Activated naive CD4-positive, alpha-beta T cell treated with anti-CD3 and anti-CD28 coated beads for 36 hours (primary cell): ENCODE measurements at regions of chr15 and their contacts with region 1.

Region 1: GRCh38 chr15:67101911-67102598 is 36.7 kb downstream of the SMAD3 start:
- DNase-seq: peak; percentile 80
- H3K4me3 Mint-ChIP-seq: no peak overlapping the region
- H3K27ac Mint-ChIP-seq: no peak overlapping the region
- H3K4me1 Mint-ChIP-seq: peaks cover 31% of the 10 kb centered on the region
- H3K27me3 Mint-ChIP-seq: no peaks in the 10 kb centered on the region

Region 2: GRCh38 chr15:67065444-67066093 is 36.5 kb before region 1 on chr15 and contains the start of gene SMAD3:
- CTCF ChIA-PET with region 1: interaction called, 19 read pairs
- intact Hi-C with region 1: loop called (anchors 1 kb)
- DNase-seq: peak; percentile 80
- H3K4me3 Mint-ChIP-seq: peak within 1 kb of the TSS; percentile 95
- H3K27ac Mint-ChIP-seq: peak within 1 kb of the TSS; percentile 89
- H3K4me1 Mint-ChIP-seq: peaks cover 50% of the 10 kb centered on the region
- H3K27me3 Mint-ChIP-seq: peaks cover 17% of the 10 kb centered on the region
- total RNA-seq, gene SMAD3: 35.1 to 39.2 TPM

Region 3: GRCh38 chr15:67091071-67091979 is 10.7 kb before region 1 on chr15:
- CTCF ChIA-PET with region 1: interaction called, 9 read pairs
- intact Hi-C with region 1: loop called (anchors 1 kb)
- DNase-seq: peak; percentile 67
- H3K4me3 Mint-ChIP-seq: no peak overlapping the region
- H3K27ac Mint-ChIP-seq: no peak overlapping the region
- H3K4me1 Mint-ChIP-seq: peaks cover 64% of the 10 kb centered on the region
- H3K27me3 Mint-ChIP-seq: no peaks in the 10 kb centered on the region

Region 4: DNA sequence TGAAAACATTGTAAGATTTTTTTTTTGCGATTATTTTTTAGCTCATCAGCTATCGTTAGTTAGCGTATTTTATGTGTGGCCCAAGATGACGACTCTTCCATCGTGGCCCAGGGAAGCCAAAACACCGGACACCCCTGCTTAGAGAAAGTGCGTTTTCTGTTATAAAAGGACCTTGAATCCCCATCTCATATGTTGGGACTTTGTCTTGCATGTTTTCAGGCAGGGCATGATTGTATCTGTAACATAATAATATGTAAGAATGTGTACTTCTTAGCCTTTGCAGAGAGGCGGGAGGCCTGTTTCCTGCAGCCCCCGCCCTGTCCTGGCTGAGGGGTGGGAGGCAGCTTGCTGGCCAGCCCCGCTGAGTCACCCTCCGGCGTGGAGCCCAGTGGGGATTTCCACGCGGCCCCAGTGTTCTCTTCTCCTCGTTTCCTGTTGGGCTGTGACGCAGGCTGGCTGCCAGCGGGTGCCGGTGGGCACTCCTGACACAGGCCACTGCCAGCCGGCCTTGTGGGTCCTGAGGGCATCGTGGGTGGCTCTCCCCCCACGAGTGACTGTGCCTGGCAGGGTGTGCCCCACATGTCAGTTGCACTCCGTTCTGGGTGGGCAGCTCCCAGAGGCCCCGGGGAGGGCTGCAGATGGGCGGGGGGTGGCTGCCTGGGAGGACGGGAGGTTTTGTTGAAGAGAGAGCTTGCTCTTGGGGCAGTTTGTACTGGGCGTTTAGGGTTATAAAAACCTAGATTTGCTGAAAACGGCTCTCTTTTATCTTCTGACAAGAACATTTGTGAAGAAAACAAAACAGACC is 19.0 kb after region 1 on chr15:
- CTCF ChIA-PET with region 1: interaction called, 9 read pairs
- intact Hi-C with region 1: loop called (anchors 1 kb)
- DNase-seq: peak; percentile 94
- H3K4me3 Mint-ChIP-seq: peak overlapping the region; percentile 70
- H3K27ac Mint-ChIP-seq: peak overlapping the region; percentile 95
- H3K4me1 Mint-ChIP-seq: peaks cover 80% of the 10 kb centered on the region
- H3K27me3 Mint-ChIP-seq: no peaks in the 10 kb centered on the region

Region 5: GRCh38 chr15:67150028-67150860 is 48.2 kb after region 1 on chr15:
- CTCF ChIA-PET with region 1: interaction called, 8 read pairs
- intact Hi-C with region 1: loop called (anchors 1 kb)
- DNase-seq: peak; percentile 72
- H3K4me3 Mint-ChIP-seq: peak overlapping the region; percentile 59
- H3K27ac Mint-ChIP-seq: peak overlapping the region; percentile 91
- H3K4me1 Mint-ChIP-seq: peaks cover 67% of the 10 kb centered on the region
- H3K27me3 Mint-ChIP-seq: no peaks in the 10 kb centered on the region

Region 6: DNA sequence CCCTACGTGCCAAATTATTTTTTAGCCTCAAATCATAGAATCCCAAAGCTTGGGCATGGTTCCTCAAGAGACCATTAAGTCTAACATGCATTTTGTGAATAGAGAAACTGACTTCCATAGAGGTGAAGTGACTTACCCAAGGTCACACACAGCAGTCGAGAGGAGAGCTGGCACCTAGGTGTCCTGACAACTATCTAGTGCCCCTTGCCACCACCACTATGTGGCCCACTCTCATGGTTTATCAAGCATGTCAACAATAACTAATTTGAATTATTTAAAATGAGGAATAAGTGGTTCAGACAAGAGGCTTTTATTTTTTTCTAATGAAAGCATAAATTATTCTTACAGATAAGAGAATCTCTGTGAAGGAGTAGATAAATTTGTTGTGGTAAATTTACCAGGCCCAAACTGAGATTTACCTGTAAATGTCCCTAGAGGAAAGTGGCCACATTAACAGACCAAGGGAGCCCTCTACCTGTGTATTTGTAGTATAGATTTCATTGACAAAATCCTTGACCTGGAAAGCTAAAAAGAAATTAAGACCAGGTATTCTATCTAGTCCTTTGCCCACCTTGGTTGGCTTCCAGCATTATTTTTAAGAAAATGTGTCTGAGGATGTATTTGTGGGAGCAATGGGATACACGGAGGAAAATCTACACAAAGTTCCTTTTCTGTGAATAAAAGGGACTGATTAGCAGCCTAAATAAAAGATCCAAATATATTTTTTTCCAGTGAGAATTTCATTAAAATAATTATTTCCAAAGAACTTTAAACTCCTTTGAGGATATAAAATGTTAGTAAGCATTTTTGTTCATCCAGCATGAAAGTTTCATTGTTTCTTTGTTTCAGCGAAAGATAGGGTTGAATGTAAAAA is 201.7 kb after region 1 on chr15:
- CTCF ChIA-PET with region 1: interaction called, 4 read pairs
- intact Hi-C with region 1: loop called (anchors 1 kb)
- DNase-seq: peak; percentile 41
- H3K4me3 Mint-ChIP-seq: no peak overlapping the region
- H3K27ac Mint-ChIP-seq: no peak overlapping the region
- H3K4me1 Mint-ChIP-seq: peaks cover 15% of the 10 kb centered on the region
- H3K27me3 Mint-ChIP-seq: no peaks in the 10 kb centered on the region